ENCODE measurements at regions of chr10 and their contacts with region 1.

Region 1: DNA sequence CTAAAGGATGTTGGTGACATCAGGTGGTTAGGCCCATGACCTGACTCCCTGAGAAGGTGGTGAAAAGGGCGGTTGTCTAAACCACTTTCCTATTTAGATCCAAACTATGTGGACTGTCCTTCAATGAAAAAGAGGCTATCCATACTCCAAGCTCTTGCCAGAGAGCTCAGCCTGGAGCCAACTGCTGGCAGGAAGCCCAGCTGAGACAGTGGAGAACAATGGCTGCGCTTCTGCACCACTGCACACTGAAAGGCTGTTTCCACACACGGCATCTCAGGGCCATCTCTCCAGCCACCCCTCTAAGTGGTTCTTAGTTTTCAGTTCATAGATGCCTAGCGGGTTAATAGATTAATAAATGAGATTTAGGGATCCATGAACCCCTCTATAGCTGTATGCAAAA is 488.8 kb upstream of the ZMIZ1 start:
- DNase-seq: no peak
- H3K4me3 Mint-ChIP-seq: no peak overlapping the region
- H3K27ac Mint-ChIP-seq: no peak overlapping the region
- H3K4me1 Mint-ChIP-seq: peaks cover 14% of the 10 kb centered on the region
- H3K27me3 Mint-ChIP-seq: no peaks in the 10 kb centered on the region

Region 2: DNA sequence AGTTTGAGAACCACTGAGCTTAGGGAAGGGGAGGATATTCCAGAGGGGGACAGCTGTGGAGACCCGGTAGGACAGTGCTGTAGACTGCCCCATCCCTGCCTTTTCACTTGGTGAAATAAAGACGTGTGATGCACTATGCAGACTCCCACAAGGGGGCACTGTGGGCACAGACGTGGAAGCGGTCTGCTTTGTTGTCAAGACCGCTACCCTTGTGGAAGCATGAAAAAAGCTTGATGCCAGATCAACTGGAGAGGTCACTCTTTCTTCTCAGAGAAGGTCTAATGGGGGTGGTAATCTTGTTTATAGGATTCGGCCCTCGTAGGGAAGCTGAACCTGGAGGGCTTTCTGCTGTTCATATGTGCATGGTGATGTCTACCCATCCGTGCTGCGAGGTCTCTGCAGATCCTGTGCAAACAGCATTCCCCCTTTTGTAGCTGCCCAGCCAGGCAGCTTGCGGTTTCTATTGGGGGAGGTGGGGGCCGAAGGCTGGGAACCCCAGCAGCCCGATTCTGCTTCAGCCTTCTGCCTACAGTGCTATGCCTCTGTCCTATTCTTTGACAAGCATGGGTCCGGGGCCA is 532.6 kb before region 1 on chr10:
- intact Hi-C with region 1: loop called (anchors 10 kb)
- DNase-seq: peak; percentile 95
- H3K4me3 Mint-ChIP-seq: no peak overlapping the region
- H3K27ac Mint-ChIP-seq: no peak overlapping the region
- H3K4me1 Mint-ChIP-seq: peaks cover 21% of the 10 kb centered on the region
- H3K27me3 Mint-ChIP-seq: no peaks in the 10 kb centered on the region

Region 3: GRCh38 chr10:78302989-78303854 is 276.8 kb before region 1 on chr10:
- intact Hi-C with region 1: loop called (anchors 1 kb)
- DNase-seq: peak; percentile 97
- H3K4me3 Mint-ChIP-seq: peak overlapping the region; percentile 93
- H3K27ac Mint-ChIP-seq: peak overlapping the region; percentile 96
- H3K4me1 Mint-ChIP-seq: peaks cover 14% of the 10 kb centered on the region
- H3K27me3 Mint-ChIP-seq: peaks cover 23% of the 10 kb centered on the region

Region 4: DNA sequence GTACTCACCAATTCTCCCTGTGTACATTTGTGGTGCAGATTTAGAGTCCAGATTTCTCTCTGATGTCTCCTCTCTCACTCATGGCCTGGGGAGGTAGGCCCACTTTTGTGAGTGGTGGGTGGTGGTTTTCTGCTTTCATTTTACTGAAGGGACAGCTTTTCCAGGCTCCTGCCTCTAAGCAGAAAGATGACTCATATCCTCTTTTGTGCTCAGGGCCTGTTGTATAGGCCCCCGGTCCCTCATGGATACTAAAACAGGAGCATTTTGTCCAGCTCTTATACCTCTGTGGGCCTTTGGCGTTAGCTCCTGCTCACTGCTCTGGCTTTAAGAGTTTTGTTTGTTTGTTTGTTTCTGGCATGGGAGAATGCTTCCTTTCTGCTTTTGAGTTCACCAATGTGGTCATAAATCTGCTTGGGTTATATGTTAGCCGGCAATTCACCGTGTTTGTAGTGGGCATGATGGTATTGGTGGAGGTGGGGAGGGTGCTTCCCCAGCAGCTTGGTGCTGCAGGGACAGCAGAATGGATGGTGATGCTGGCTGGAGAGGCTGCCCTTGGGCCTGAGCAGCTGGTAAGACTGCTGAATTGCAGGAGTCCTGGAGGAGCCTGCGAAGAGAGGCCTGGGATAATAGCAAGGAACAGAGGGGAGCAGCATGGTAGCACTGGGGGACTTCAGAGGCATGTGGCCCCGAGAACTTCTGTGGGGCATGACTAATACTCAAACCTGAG is 77.6 kb before region 1 on chr10:
- intact Hi-C with region 1: no loop called
- DNase-seq: peak; percentile 44
- H3K4me3 Mint-ChIP-seq: no peak overlapping the region
- H3K27ac Mint-ChIP-seq: no peak overlapping the region
- H3K4me1 Mint-ChIP-seq: peaks cover 6% of the 10 kb centered on the region
- H3K27me3 Mint-ChIP-seq: peaks cover 6% of the 10 kb centered on the region

Region 5: DNA sequence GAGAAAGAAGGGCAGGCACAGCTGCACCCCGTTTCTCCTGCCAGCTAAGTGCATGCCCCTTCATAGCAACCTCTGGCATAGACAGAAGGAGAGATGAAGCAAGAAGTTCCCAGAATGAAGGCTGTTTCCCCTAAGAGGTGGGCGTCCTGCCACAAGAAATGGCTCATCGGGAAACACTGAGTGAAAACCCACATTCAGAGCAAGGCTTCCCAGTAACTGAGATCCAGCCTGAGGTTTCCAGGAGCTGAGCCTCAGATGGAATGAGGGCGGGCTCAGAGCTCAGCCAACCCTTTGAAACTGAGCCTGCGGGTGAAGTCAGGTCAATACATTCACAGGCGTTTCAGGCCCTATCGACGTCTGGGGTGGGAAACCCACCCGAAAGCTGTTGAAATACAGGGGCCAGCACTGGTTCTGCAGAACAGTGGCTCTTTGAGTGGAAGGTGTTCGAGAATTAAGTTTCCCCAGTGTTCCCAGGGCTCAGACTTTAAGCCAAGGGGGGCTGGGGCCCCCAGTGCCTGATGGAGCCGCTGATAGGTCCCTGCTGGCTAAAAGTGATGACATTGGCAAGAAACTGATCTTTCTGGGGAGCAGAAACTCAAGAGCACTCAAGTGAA is 36.1 kb before region 1 on chr10:
- intact Hi-C with region 1: loop called (anchors 5 kb)
- DNase-seq: no peak
- H3K4me3 Mint-ChIP-seq: no peak overlapping the region
- H3K27ac Mint-ChIP-seq: no peak overlapping the region
- H3K4me1 Mint-ChIP-seq: peaks cover 16% of the 10 kb centered on the region
- H3K27me3 Mint-ChIP-seq: peaks cover 4% of the 10 kb centered on the region

Region 6: GRCh38 chr10:78602201-78602932 is 22.4 kb after region 1 on chr10:
- intact Hi-C with region 1: loop called (anchors 2 kb)
- DNase-seq: no peak
- H3K4me3 Mint-ChIP-seq: no peak overlapping the region
- H3K27ac Mint-ChIP-seq: peak overlapping the region; percentile 48
- H3K4me1 Mint-ChIP-seq: peaks cover 6% of the 10 kb centered on the region
- H3K27me3 Mint-ChIP-seq: no peaks in the 10 kb centered on the region

Region 7: GRCh38 chr10:79331709-79332108 is 751.7 kb after region 1 on chr10:
- intact Hi-C with region 1: loop called (anchors 5 kb)
- DNase-seq: peak; percentile 95
- H3K4me3 Mint-ChIP-seq: peak overlapping the region; percentile 56
- H3K27ac Mint-ChIP-seq: peak overlapping the region; percentile 95
- H3K4me1 Mint-ChIP-seq: peaks cover 57% of the 10 kb centered on the region
- H3K27me3 Mint-ChIP-seq: no peaks in the 10 kb centered on the region